ENCODE measurements at regions of chr19 and their contacts with region 1.

Region 1: GRCh38 chr19:11964858-11965645 is at the start of gene ZNF763:
- DNase-seq: peak; percentile 97
- ATAC-seq: peak; percentile 97
- H3K4me3 Mint-ChIP-seq: peak within 1 kb of the TSS; percentile 88
- H3K27ac Mint-ChIP-seq: peak within 1 kb of the TSS; percentile 92
- H3K4me1 Mint-ChIP-seq: peaks cover 24% of the 10 kb centered on the region
- H3K27me3 Mint-ChIP-seq: no peaks in the 10 kb centered on the region
- CTCF ChIP-seq: no peak
- total RNA-seq, gene ZNF763: 0.83 to 1.7 TPM

Region 2: GRCh38 chr19:11949201-11949600 is 15.9 kb before region 1 on chr19:
- CTCF ChIA-PET with region 1: interaction called, 13 read pairs
- POLR2A ChIA-PET with region 1: no interaction called
- intact Hi-C with region 1: no loop called
- DNase-seq: no peak
- ATAC-seq: no peak
- H3K4me3 Mint-ChIP-seq: no peak overlapping the region
- H3K27ac Mint-ChIP-seq: no peak overlapping the region
- H3K4me1 Mint-ChIP-seq: no peaks in the 10 kb centered on the region
- H3K27me3 Mint-ChIP-seq: no peaks in the 10 kb centered on the region
- CTCF ChIP-seq: no peak

Region 3: GRCh38 chr19:12015753-12016116 is 50.7 kb after region 1 on chr19:
- CTCF ChIA-PET with region 1: no interaction called
- POLR2A ChIA-PET with region 1: no interaction called
- intact Hi-C with region 1: no loop called
- DNase-seq: no peak
- ATAC-seq: no peak
- H3K4me3 Mint-ChIP-seq: no peak overlapping the region
- H3K27ac Mint-ChIP-seq: no peak overlapping the region
- H3K4me1 Mint-ChIP-seq: no peaks in the 10 kb centered on the region
- H3K27me3 Mint-ChIP-seq: no peaks in the 10 kb centered on the region
- CTCF ChIP-seq: no peak

Region 4: GRCh38 chr19:12043752-12044422 is 78.8 kb after region 1 on chr19:
- CTCF ChIA-PET with region 1: no interaction called
- POLR2A ChIA-PET with region 1: no interaction called
- intact Hi-C with region 1: no loop called
- DNase-seq: no peak
- ATAC-seq: no peak
- H3K4me3 Mint-ChIP-seq: no peak overlapping the region
- H3K27ac Mint-ChIP-seq: no peak overlapping the region
- H3K4me1 Mint-ChIP-seq: no peaks in the 10 kb centered on the region
- H3K27me3 Mint-ChIP-seq: no peaks in the 10 kb centered on the region
- CTCF ChIP-seq: no peak